ENCODE measurements at regions of chr2 and their contacts with region 1.

Region 1: DNA sequence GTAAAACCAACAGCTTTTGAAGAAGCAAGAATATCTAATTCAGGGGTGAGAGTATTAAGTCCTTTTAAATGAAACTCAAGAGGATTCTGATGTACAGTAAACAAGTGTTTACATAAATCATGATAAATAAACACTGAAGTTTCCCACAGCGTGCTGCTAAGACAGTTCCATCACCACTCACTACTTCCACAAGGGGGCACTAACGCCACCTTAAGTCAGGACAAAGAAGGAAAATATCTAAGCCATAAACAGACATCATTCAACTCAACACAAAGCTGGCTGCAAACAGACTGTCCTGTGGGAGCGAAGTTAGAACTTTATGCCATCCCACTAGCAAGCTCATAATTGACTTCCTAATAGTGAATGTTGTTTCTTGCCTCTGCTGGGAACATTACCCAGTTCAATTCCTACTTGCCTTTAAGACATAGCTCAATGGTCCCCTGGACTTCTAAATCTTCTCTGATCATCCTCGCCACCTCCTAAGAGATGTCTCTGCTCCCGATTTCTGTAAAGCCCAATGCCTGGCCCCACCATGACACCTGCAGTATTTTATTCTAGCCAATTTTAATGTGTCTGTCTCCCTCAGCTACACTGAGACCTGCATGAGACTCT is 36.5 kb downstream of the MRPL44 start:
- DNase-seq: peak; percentile 66
- H3K4me3 Mint-ChIP-seq: no peak overlapping the region
- H3K27ac Mint-ChIP-seq: no peak overlapping the region
- H3K4me1 Mint-ChIP-seq: peaks cover 16% of the 10 kb centered on the region
- H3K27me3 Mint-ChIP-seq: no peaks in the 10 kb centered on the region

Region 2: DNA sequence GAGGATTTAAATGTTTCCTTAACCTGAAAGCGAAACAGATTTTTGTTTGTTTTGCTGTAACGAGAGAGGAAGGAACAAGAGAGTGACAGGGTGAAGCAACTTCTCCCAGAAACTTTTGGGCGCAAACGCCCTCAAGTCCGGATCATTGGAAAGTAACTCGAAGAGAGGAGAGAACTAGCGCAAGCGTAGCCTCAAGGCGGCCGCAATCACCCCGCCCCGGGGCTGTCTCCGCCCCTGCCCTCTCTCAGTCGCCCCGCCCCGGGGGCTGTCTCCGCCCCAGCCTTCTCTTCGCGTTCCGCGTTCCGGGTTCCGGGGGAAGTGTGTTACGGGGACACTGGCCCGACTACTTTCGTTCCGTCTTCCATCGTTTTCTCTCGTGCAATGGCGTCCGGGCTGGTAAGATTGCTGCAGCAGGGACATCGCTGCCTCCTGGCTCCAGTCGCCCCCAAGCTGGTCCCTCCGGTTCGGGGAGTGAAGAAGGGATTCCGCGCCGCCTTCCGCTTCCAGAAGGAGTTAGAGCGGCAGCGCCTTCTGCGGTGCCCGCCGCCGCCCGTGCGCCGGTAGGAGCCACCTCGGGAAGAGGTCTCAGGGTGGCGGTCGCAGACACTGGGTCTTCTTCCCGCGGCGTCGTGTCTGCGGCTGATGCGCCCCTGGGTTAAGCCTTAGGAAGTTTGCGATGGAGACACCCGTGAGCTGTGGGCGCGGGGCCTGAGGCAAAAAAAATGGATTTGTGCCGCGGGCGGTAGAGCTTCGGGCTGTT is 36.5 kb before region 1 on chr2 and contains the start of gene MRPL44:
- CTCF ChIA-PET with region 1: interaction called, 12 read pairs
- POLR2A ChIA-PET with region 1: no interaction called
- intact Hi-C with region 1: no loop called
- DNase-seq: peak; percentile 98
- H3K4me3 Mint-ChIP-seq: peak within 1 kb of the TSS; percentile 92
- H3K27ac Mint-ChIP-seq: peak within 1 kb of the TSS; percentile 88
- H3K4me1 Mint-ChIP-seq: peaks cover 65% of the 10 kb centered on the region
- H3K27me3 Mint-ChIP-seq: no peaks in the 10 kb centered on the region
- total RNA-seq, gene MRPL44: 39.4 to 41.6 TPM

Region 3: GRCh38 chr2:223976635-223977226 is 17.0 kb before region 1 on chr2:
- CTCF ChIA-PET with region 1: interaction called, 76 read pairs
- POLR2A ChIA-PET with region 1: no interaction called
- intact Hi-C with region 1: no loop called
- DNase-seq: no peak
- H3K4me3 Mint-ChIP-seq: no peak overlapping the region
- H3K27ac Mint-ChIP-seq: no peak overlapping the region
- H3K4me1 Mint-ChIP-seq: no peaks in the 10 kb centered on the region
- H3K27me3 Mint-ChIP-seq: no peaks in the 10 kb centered on the region

Region 4: GRCh38 chr2:224025874-224026273 is 32.1 kb after region 1 on chr2:
- CTCF ChIA-PET with region 1: interaction called, 10 read pairs
- POLR2A ChIA-PET with region 1: no interaction called
- intact Hi-C with region 1: loop called (anchors 2 kb)
- DNase-seq: peak; percentile 77
- H3K4me3 Mint-ChIP-seq: peak overlapping the region; percentile 30
- H3K27ac Mint-ChIP-seq: peak overlapping the region; percentile 85
- H3K4me1 Mint-ChIP-seq: peaks cover 48% of the 10 kb centered on the region
- H3K27me3 Mint-ChIP-seq: no peaks in the 10 kb centered on the region

Region 5: GRCh38 chr2:224062481-224063297 is 69.0 kb after region 1 on chr2:
- CTCF ChIA-PET with region 1: interaction called, 15 read pairs
- POLR2A ChIA-PET with region 1: no interaction called
- intact Hi-C with region 1: no loop called
- DNase-seq: no peak
- H3K4me3 Mint-ChIP-seq: no peak overlapping the region
- H3K27ac Mint-ChIP-seq: no peak overlapping the region
- H3K4me1 Mint-ChIP-seq: no peaks in the 10 kb centered on the region
- H3K27me3 Mint-ChIP-seq: peaks cover 2% of the 10 kb centered on the region

Region 6: DNA sequence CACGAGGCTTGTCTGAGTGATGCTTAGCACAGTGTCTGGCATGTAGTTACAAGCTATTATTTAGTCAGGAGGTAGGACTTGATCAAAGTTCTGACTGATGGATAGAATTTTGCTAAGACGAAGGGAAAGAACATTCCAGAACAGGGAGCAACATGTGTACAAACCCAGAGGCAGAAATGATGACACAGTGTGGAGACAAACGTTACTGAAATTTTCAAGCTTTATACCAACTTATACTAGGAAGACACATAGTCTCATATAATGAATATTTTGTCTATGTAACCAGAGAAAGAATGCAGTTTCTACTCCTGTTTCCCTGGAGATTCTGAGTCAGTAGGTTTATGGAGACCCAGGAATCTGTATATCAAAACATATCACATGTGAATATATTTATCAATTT is 284.8 kb after region 1 on chr2:
- CTCF ChIA-PET with region 1: interaction called, 263 read pairs
- POLR2A ChIA-PET with region 1: interaction called, 3 read pairs
- intact Hi-C with region 1: no loop called
- DNase-seq: no peak
- H3K4me3 Mint-ChIP-seq: no peak overlapping the region
- H3K27ac Mint-ChIP-seq: no peak overlapping the region
- H3K4me1 Mint-ChIP-seq: no peaks in the 10 kb centered on the region
- H3K27me3 Mint-ChIP-seq: peaks cover 7% of the 10 kb centered on the region

Region 7: DNA sequence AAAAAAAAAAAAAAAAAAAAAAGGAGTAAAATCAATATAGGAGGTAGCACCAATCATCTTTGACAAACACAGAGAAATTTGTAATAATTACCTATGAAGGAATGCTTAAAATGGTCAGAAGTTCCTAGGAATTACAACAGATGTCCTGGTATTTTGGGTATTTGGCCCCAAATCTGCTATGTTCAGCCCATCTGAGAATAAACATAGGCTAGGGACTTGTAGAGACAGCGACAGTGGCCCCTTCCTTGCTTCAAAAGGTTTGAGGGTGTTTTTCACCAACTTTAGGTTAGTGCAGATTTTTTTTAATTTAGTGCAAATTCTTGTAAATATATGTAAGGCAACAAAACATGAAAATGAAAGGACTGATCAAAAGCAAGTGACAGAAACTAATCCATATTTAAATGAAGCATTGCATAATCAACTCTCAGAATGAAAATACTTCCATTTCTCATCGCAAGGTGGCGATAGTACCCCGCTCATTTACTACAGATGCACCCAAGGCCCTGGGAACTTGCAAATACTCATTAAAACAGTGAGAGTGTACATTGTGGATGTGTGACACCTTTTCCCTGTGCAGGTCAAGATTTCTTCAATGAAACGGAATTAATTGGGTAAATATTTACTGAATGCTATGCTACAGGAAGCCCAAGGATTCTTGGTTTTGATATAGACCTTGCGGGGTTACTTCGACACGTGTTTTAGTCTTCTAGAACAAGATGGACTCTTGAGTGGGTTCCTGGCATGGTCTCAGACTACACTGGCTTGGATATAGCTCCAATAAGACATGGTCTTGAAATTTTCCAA is 363.6 kb after region 1 on chr2:
- CTCF ChIA-PET with region 1: interaction called, 3 read pairs
- POLR2A ChIA-PET with region 1: no interaction called
- intact Hi-C with region 1: loop called (anchors 5 kb)
- DNase-seq: peak; percentile 62
- H3K4me3 Mint-ChIP-seq: no peak overlapping the region
- H3K27ac Mint-ChIP-seq: no peak overlapping the region
- H3K4me1 Mint-ChIP-seq: no peaks in the 10 kb centered on the region
- H3K27me3 Mint-ChIP-seq: peaks cover 2% of the 10 kb centered on the region

Measured in activated CD4-positive, alpha-beta memory T cell treated with anti-CD3 and anti-CD28 coated beads for 36 hours (primary cell).